PC-9 (cell line): ENCODE measurements at regions of chrX and their contacts with region 1.

Region 1: GRCh38 chrX:131704136-131704695 is 160.3 kb downstream of the OR13H1 start:
- DNase-seq: peak; percentile 36 to 72
- H3K4me3 ChIP-seq: peak overlapping the region; percentile 31; the same call in 1 of the 2 replicates
- H3K27ac ChIP-seq: no peak overlapping the region
- H3K4me1 ChIP-seq: no peaks in the 10 kb centered on the region
- H3K27me3 ChIP-seq: no peaks in the 10 kb centered on the region
- CTCF ChIP-seq: peak; percentile 28; the same call in 1 of the 2 replicates

Region 2: GRCh38 chrX:131394384-131394783 is 309.8 kb before region 1 on chrX:
- CTCF ChIA-PET with region 1: no interaction called
- POLR2A ChIA-PET with region 1: no interaction called
- intact Hi-C with region 1: no loop called
- DNase-seq: peak; percentile 3 to 64
- H3K4me3 ChIP-seq: no peak overlapping the region
- H3K27ac ChIP-seq: no peak overlapping the region
- H3K4me1 ChIP-seq: no peaks in the 10 kb centered on the region
- H3K27me3 ChIP-seq: no peaks in the 10 kb centered on the region
- CTCF ChIP-seq: no peak

Region 3: DNA sequence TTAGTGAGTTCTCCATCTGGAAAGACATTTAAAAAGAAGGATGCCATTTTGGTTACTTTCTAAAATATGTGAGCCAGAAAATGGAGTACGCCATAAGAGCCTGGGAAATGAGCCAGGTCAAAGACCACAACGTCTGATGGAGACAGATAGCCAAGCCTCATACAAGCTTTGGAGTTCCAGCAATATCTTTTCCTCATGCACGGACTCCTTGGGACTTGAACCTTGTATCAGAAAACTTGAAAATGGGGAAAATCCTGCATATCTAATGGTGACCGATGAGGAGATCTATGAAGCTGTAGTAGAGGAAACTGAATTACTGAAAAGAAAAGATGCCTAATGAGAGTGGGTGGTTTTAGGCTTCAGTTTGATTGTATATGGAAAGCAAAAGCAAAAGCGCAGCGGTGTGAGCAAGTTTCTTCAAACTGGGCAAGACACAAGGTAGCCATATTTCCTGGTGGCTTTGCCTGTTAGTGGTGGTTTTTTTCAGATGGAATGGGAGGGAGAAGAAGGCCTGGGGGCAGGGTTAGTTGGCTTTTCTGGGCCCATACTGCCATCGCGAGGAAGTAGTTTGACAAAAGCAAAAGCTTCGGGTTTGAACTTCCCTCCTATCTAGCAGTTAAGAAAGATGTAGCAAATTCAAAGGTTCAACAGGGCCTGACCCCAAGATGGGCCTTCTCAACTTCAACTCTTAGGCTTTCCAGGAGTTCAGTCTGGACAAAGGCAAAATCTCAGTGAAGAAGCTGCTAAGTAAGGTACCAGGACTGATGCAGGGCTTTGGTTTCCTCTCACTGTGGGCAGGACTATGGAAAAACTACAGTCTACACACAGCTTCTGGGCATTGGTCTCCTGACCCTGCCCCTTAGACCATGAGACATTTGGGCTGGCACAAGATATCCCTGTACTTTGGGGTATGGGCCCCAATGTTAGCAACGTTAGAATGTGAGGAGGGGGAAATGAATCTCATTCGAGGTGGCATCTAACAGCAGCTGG is 108.9 kb after region 1 on chrX:
- CTCF ChIA-PET with region 1: interaction called, 3 read pairs
- POLR2A ChIA-PET with region 1: no interaction called
- intact Hi-C with region 1: loop called (anchors 1 kb)
- DNase-seq: peak in 1 of 2 experiments; percentile 72
- H3K4me3 ChIP-seq: no peak overlapping the region
- H3K27ac ChIP-seq: no peak overlapping the region
- H3K4me1 ChIP-seq: no peaks in the 10 kb centered on the region
- H3K27me3 ChIP-seq: no peaks in the 10 kb centered on the region
- CTCF ChIP-seq: no peak

Region 4: DNA sequence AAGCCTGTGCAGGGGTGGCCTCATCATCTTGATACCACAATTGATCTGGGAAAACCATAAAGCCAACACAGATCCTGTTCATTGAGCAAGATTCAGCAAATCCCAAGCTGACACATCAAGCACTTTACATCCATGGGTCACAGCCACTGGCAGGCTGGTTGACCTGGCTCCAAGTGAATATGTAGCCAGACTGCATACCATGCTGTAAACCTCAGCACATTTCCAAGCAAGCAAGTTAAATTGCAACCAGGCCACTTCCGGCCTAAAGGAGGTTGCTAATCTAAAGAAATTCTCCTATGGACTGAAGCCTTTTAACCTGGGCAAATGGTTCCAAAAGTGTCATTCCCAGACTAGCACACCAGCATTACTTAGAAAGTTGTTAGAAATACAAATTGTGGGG is 1447.1 kb after region 1 on chrX:
- CTCF ChIA-PET with region 1: no interaction called
- POLR2A ChIA-PET with region 1: no interaction called
- intact Hi-C with region 1: no loop called
- DNase-seq: peak; percentile 3 to 59
- H3K4me3 ChIP-seq: no peak overlapping the region
- H3K27ac ChIP-seq: no peak overlapping the region
- H3K4me1 ChIP-seq: no peaks in the 10 kb centered on the region
- H3K27me3 ChIP-seq: no peaks in the 10 kb centered on the region
- CTCF ChIP-seq: no peak